ENCODE measurements at regions of chr7 and their contacts with region 1.

Region 1: GRCh38 chr7:108146070-108146837 is 16.1 kb upstream of the LAMB4 start:
- DNase-seq: peak; percentile 64
- H3K4me3 Mint-ChIP-seq: no peak overlapping the region
- H3K27ac Mint-ChIP-seq: no peak overlapping the region
- H3K4me1 Mint-ChIP-seq: no peaks in the 10 kb centered on the region
- H3K27me3 Mint-ChIP-seq: no peaks in the 10 kb centered on the region

Region 2: GRCh38 chr7:108103558-108104298 is 42.5 kb before region 1 on chr7:
- CTCF ChIA-PET with region 1: interaction called, 61 read pairs
- intact Hi-C with region 1: no loop called
- DNase-seq: no peak
- H3K4me3 Mint-ChIP-seq: no peak overlapping the region
- H3K27ac Mint-ChIP-seq: no peak overlapping the region
- H3K4me1 Mint-ChIP-seq: no peaks in the 10 kb centered on the region
- H3K27me3 Mint-ChIP-seq: no peaks in the 10 kb centered on the region

Region 3: GRCh38 chr7:108114117-108114841 is 32.0 kb before region 1 on chr7:
- CTCF ChIA-PET with region 1: interaction called, 61 read pairs
- intact Hi-C with region 1: loop called (anchors 1 kb)
- DNase-seq: peak; percentile 27
- H3K4me3 Mint-ChIP-seq: no peak overlapping the region
- H3K27ac Mint-ChIP-seq: no peak overlapping the region
- H3K4me1 Mint-ChIP-seq: no peaks in the 10 kb centered on the region
- H3K27me3 Mint-ChIP-seq: peaks cover 3% of the 10 kb centered on the region

Region 4: DNA sequence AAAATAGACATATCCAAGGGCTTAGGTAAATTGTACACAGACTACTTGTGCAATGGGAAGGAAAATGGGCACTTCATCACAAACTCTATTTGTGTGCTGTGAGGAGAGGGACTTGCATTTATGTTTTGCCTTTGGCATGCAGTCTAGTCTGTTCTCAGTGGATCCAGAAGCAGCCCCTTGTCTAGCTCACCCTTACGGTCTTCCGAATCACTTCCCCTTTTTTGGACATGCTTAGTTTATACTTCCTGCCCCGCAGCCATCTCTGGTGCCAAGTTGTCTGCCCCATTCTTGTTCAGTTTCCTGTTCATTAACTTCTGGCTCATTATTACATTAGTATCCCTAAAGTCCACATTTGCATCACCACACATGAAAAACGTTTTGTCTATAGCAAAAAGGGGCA is 148.3 kb after region 1 on chr7:
- CTCF ChIA-PET with region 1: no interaction called
- intact Hi-C with region 1: no loop called
- DNase-seq: no peak
- H3K4me3 Mint-ChIP-seq: no peak overlapping the region
- H3K27ac Mint-ChIP-seq: no peak overlapping the region
- H3K4me1 Mint-ChIP-seq: no peaks in the 10 kb centered on the region
- H3K27me3 Mint-ChIP-seq: peaks cover 8% of the 10 kb centered on the region

Measured in activated naive CD4-positive, alpha-beta T cell treated with anti-CD3 and anti-CD28 coated beads for 36 hours (primary cell).